ENCODE measurements at regions of chr1 and their contacts with region 1.

Region 1: DNA sequence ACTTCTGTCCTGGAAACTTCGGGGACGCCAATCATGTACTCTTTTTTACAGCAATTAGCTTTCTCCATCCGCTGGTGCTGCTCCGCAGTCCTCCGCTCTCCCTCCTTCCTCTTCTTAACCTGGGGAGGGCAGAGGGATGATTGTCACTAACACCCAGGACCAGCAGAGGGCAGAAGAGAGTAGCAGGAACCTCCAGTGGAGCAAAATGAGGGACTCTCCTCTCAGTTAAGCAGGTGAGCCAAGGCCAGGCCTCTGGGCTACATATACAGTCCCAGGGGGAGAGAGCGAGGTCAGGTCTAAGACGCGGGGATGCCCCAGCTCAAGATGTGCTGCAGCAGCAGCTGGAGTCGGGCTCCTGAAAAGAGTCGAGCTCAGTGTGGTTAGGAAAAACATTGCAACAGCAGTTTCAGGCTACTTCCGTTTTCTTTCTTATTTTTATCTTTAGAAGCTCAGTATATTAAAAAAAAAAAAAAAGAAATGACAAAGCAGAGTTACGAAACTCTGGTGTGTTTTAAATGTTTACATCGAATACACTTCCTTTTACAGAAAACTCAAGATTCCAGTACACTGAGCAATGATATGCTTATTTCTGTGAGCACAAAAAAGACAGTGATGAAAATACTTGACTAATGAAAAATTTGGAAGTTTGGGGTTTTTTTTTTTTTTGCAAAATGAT is 25.7 kb upstream of the NLRP3 start:
- DNase-seq: peak; percentile 96
- H3K4me3 Mint-ChIP-seq: peak overlapping the region; percentile 17
- H3K27ac Mint-ChIP-seq: peak overlapping the region; percentile 3
- H3K4me1 Mint-ChIP-seq: peaks cover 25% of the 10 kb centered on the region
- H3K27me3 Mint-ChIP-seq: no peaks in the 10 kb centered on the region
- CTCF ChIP-seq: peak; percentile 99

Region 2: GRCh38 chr1:247401310-247402119 is 11.3 kb after region 1 on chr1:
- CTCF ChIA-PET with region 1: interaction called, 81 read pairs
- POLR2A ChIA-PET with region 1: interaction called, 4 read pairs
- intact Hi-C with region 1: no loop called
- DNase-seq: peak; percentile 49
- H3K4me3 Mint-ChIP-seq: peak overlapping the region; percentile 49
- H3K27ac Mint-ChIP-seq: peak overlapping the region; percentile 41
- H3K4me1 Mint-ChIP-seq: peaks cover 21% of the 10 kb centered on the region
- H3K27me3 Mint-ChIP-seq: no peaks in the 10 kb centered on the region
- CTCF ChIP-seq: no peak

Region 3: DNA sequence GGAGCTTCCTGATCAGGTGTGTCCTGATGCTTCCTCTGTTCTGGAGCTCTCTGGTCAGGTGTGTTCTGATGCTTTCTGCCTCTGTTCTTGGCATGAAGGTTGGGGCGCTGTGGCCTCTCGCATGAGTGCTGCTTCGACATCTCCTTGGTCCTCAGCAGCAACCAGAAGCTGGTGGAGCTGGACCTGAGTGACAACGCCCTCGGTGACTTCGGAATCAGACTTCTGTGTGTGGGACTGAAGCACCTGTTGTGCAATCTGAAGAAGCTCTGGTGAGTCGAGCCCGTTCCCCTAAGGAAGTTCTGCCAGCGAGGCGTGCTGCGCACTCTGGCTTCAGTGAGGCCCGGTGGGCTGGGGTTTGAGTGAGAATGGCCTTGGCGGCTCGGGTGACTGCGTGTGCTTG is 43.8 kb after region 1 on chr1:
- CTCF ChIA-PET with region 1: interaction called, 15 read pairs
- POLR2A ChIA-PET with region 1: no interaction called
- intact Hi-C with region 1: no loop called
- DNase-seq: no peak
- H3K4me3 Mint-ChIP-seq: no peak overlapping the region
- H3K27ac Mint-ChIP-seq: no peak overlapping the region
- H3K4me1 Mint-ChIP-seq: no peaks in the 10 kb centered on the region
- H3K27me3 Mint-ChIP-seq: no peaks in the 10 kb centered on the region
- CTCF ChIP-seq: no peak

Region 4: GRCh38 chr1:247465796-247466195 is 75.5 kb after region 1 on chr1:
- CTCF ChIA-PET with region 1: interaction called, 17 read pairs
- POLR2A ChIA-PET with region 1: interaction called, 3 read pairs
- intact Hi-C with region 1: no loop called
- DNase-seq: no peak
- H3K4me3 Mint-ChIP-seq: no peak overlapping the region
- H3K27ac Mint-ChIP-seq: no peak overlapping the region
- H3K4me1 Mint-ChIP-seq: no peaks in the 10 kb centered on the region
- H3K27me3 Mint-ChIP-seq: no peaks in the 10 kb centered on the region
- CTCF ChIP-seq: no peak

Region 5: GRCh38 chr1:247494767-247495166 is 104.5 kb after region 1 on chr1:
- CTCF ChIA-PET with region 1: interaction called, 697 read pairs
- POLR2A ChIA-PET with region 1: no interaction called
- intact Hi-C with region 1: no loop called
- DNase-seq: peak; percentile 27
- H3K4me3 Mint-ChIP-seq: no peak overlapping the region
- H3K27ac Mint-ChIP-seq: no peak overlapping the region
- H3K4me1 Mint-ChIP-seq: peaks cover 13% of the 10 kb centered on the region
- H3K27me3 Mint-ChIP-seq: peaks cover 15% of the 10 kb centered on the region
- CTCF ChIP-seq: no peak

Region 6: GRCh38 chr1:247749870-247750269 is 359.6 kb after region 1 on chr1:
- CTCF ChIA-PET with region 1: no interaction called
- POLR2A ChIA-PET with region 1: no interaction called
- intact Hi-C with region 1: no loop called
- DNase-seq: no peak
- H3K4me3 Mint-ChIP-seq: no peak overlapping the region
- H3K27ac Mint-ChIP-seq: no peak overlapping the region
- H3K4me1 Mint-ChIP-seq: peaks cover 31% of the 10 kb centered on the region
- H3K27me3 Mint-ChIP-seq: no peaks in the 10 kb centered on the region
- CTCF ChIP-seq: no peak

Measured in MCF 10A (cell line).